ENCODE measurements at regions of chr18 and their contacts with region 1.

Region 1: DNA sequence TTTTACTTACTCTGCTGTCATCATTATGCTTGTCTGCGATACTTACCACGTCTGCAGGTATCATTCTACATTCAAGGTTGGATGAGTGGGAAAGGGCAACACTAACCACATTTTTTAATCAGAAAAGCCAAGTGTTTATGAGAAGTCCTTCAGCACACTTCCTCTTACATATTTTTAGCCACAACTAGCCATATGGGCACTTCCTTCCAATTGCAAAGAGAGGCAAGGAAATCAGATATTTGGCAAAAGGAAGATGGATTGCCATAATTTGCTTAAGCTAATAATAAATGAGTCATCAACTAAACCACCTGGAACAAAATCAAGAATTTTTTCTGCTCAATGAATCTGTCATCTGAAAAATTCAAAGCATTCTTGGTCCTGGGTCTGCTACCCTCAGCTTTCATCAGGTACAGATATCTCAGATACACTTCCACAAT is 16.7 kb upstream of the MRO start:
- DNase-seq: no peak
- ATAC-seq: peak; percentile 80
- H3K4me3 Mint-ChIP-seq: peak overlapping the region; percentile 16
- H3K27ac Mint-ChIP-seq: peak overlapping the region; percentile 35
- H3K4me1 Mint-ChIP-seq: peaks cover 30% of the 10 kb centered on the region
- H3K27me3 Mint-ChIP-seq: no peaks in the 10 kb centered on the region
- CTCF ChIP-seq: no peak

Region 2: DNA sequence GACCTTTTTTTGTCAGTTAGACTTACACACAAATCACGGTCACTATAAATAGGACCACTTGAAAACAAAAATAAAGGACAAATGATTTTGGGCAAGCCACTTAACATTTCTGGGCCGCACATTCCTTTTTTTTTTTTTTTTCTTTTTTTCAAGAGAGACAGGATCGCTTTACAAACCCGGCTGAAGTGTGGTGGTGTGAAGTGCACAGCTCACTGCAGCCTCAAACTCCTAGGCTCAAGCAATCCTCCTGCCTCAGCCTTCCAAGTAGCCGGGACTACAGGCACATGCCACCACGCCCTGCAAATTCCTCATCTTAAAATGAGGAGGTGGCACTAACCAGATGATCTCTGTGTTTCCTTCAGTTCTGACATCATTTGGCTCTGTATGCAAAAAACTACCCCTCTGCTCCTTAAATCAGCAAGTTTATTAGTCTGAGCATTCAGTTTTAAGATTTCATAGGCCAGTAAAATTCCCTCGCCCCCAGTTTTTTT is 11.6 kb after region 1 on chr18:
- CTCF ChIA-PET with region 1: no interaction called
- POLR2A ChIA-PET with region 1: interaction called, 10 read pairs
- intact Hi-C with region 1: no loop called
- DNase-seq: no peak
- ATAC-seq: no peak
- H3K4me3 Mint-ChIP-seq: no peak overlapping the region
- H3K27ac Mint-ChIP-seq: no peak overlapping the region
- H3K4me1 Mint-ChIP-seq: no peaks in the 10 kb centered on the region
- H3K27me3 Mint-ChIP-seq: peaks cover 2% of the 10 kb centered on the region
- CTCF ChIP-seq: no peak

Region 3: DNA sequence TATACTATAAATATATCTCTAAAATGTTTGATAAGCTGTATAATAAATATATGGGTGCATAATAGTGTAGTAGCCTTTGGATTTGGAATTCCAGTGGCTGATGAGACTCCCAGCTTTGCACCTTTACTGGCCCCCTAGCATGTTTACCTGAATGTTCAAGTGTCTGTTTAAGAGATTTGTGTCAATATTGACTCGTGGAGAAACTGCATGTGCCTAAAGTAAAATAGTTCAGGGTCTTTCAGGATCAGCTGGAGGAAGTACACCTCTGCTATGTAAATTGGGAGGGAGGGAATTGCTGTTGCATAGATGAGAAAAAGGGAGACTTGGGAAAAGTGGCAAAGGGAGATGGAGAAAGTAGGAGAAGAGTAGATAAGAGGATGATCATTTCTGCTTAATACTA is 66.3 kb after region 1 on chr18:
- CTCF ChIA-PET with region 1: no interaction called
- POLR2A ChIA-PET with region 1: no interaction called
- intact Hi-C with region 1: loop called (anchors 2 kb)
- DNase-seq: no peak
- ATAC-seq: no peak
- H3K4me3 Mint-ChIP-seq: no peak overlapping the region
- H3K27ac Mint-ChIP-seq: no peak overlapping the region
- H3K4me1 Mint-ChIP-seq: peaks cover 20% of the 10 kb centered on the region
- H3K27me3 Mint-ChIP-seq: no peaks in the 10 kb centered on the region
- CTCF ChIP-seq: no peak